Activated CD4-positive, alpha-beta memory T cell treated with anti-CD3 and anti-CD28 coated beads for 36 hours (primary cell): ENCODE measurements at regions of chr17 and their contacts with region 1.

Region 1: GRCh38 chr17:49191917-49192741 is 18.2 kb downstream of the GNGT2 start:
- DNase-seq: peak; percentile 95
- H3K4me3 Mint-ChIP-seq: peak overlapping the region; percentile 83
- H3K27ac Mint-ChIP-seq: peak overlapping the region; percentile 98
- H3K4me1 Mint-ChIP-seq: peaks cover 28% of the 10 kb centered on the region
- H3K27me3 Mint-ChIP-seq: no peaks in the 10 kb centered on the region

Region 2: DNA sequence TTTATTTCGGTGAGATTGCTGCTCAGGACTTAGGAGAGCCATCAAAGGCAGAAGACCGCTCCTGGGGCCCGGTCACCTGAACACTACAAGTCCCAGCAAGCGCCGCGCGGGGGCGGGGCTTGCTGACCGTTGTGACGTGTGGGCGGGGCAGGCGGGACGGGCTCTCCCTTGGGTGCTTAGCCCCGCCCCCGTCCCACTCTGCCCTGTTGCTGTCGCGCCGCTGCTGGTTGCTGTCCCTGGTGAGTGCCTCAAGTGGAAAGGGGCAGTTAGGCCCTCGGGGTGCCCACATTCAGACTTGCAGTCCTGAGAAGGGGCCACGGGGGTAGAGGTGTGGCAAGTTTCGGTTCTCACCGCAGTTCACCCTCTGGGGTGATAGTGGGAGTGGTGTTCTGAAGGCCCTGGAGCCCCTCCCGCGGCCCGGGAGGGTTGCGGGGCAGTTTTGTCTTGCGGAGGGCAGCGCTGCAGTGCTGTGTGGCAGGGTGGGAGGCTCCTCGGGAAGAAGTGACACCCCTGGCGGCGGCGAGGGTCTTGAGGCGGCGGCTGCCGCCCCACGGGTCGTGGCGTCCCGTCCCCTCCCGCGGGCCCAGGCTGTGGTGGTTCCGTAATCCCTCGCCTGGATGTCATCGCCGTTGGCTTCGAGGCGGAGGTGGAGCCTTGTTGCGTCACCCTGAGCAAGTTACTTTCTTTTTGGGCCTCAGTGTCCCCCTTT is 361.1 kb before region 1 on chr17 and contains the start of gene CALCOCO2:
- CTCF ChIA-PET with region 1: interaction called, 6 read pairs
- POLR2A ChIA-PET with region 1: no interaction called
- intact Hi-C with region 1: loop called (anchors 10 kb)
- DNase-seq: peak; percentile 93
- H3K4me3 Mint-ChIP-seq: peak within 1 kb of the TSS; percentile 94
- H3K27ac Mint-ChIP-seq: peak within 1 kb of the TSS; percentile 87
- H3K4me1 Mint-ChIP-seq: peaks cover 42% of the 10 kb centered on the region
- H3K27me3 Mint-ChIP-seq: no peaks in the 10 kb centered on the region
- total RNA-seq, gene CALCOCO2: 65.1 to 72.1 TPM

Region 3: GRCh38 chr17:48908047-48908843 is 283.9 kb before region 1 on chr17 and contains the start of gene UBE2Z:
- CTCF ChIA-PET with region 1: no interaction called
- POLR2A ChIA-PET with region 1: interaction called, 6 read pairs
- intact Hi-C with region 1: loop called (anchors 1 kb)
- DNase-seq: peak; percentile 93
- H3K4me3 Mint-ChIP-seq: peak within 1 kb of the TSS; percentile 87
- H3K27ac Mint-ChIP-seq: peak within 1 kb of the TSS; percentile 97
- H3K4me1 Mint-ChIP-seq: peaks cover 43% of the 10 kb centered on the region
- H3K27me3 Mint-ChIP-seq: no peaks in the 10 kb centered on the region
- total RNA-seq, gene UBE2Z: 102 to 109 TPM

Region 4: DNA sequence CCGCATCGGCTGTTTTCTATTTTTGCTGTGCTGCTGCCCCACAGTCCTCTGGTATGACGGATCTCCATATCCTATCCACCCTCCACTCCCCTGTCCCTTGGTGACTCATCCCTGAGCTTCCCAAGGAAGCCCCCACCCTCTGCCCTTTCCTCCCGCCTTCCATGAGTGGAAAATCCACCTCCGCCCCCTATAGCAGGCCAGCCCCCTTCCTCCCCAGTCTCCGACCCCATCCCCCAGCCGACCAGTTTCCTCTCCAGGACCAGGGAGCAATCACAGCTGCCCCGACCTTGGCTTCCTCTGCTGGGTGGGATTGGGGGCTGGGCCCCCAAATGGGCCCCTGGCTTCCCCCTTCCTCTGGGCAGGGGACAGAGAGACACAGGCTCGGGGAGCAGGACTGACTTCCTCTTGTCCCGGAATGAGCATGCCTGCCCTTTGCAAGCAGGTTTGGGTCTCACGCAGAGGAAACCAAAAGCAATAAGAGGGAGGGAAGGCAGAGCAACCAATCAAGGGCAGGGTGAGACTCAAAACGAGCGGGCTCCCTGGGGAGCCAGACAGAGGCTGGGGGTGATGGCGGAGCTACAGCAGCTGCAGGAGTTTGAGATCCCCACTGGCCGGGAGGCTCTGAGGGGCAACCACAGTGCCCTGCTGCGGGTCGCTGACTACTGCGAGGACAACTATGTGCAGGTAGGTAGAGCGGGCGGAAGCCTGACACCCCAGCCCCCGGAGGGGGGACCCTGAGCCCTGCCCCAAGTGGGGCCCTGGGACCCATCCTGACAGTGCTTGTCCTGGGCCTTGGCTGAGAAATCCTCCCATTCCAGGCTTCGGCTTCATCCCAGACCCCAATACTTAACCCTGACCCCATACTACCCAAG is 18.3 kb after region 1 on chr17 and contains the starts of genes ABI3 and GNGT2:
- CTCF ChIA-PET with region 1: interaction called, 4 read pairs
- POLR2A ChIA-PET with region 1: interaction called, 14 read pairs
- intact Hi-C with region 1: loop called (anchors 2 kb)
- DNase-seq: peak; percentile 83
- H3K4me3 Mint-ChIP-seq: peak within 1 kb of the TSS; percentile 90
- H3K27ac Mint-ChIP-seq: peak within 1 kb of the TSS; percentile 91
- H3K4me1 Mint-ChIP-seq: peaks cover 56% of the 10 kb centered on the region
- H3K27me3 Mint-ChIP-seq: no peaks in the 10 kb centered on the region
- total RNA-seq, gene ABI3: 19.7 to 19.8 TPM
- total RNA-seq, gene GNGT2: 23.2 to 29.0 TPM

Region 5: DNA sequence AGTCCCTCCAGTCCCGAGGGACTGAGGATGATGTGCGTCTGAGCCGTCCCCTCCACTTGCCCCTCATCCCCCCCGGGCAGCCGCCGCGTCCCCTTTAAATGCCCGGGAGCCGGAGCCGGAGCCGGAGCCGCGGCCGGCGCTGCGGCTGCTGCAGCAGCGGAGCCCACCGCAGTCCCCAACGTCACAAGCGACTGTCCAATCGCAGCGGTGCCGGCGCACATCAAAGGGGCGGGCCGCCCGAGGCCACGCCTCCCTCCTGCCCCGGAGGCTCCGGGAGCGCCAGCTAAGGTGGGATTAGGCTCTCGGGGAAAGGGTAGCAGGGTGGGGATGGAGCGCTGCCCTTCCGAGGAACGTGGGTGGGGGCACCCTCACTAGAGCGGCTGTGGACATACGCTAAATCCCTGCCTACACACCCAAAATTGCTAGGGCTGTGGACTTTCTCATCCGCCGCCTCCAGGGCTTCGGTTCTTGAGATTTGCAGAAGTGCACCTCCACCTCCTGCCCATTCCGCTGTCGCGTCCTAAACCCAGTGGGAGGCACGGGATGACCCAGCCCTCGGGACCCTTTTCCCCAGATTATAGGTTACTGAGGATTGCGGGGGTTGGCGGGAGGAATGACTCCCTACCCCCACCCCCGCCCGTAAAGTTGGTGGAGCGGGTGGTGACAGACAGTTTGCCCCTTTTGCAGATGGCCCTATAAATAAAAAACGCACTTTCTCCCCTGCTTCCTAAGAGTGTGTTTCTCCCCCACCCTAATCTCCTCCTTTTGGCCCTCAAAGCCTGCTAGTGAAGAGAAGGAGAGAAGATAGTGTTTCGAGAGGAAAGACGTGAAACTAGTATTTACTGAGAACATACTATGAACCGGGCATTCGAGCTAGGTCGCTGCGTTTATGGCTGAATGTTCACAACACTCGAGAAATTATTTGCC is 38.8 kb after region 1 on chr17 and contains the start of gene PHOSPHO1:
- CTCF ChIA-PET with region 1: interaction called, 31 read pairs
- POLR2A ChIA-PET with region 1: interaction called, 6 read pairs
- intact Hi-C with region 1: no loop called
- DNase-seq: peak; percentile 89
- H3K4me3 Mint-ChIP-seq: peak within 1 kb of the TSS; percentile 74
- H3K27ac Mint-ChIP-seq: no peak within 1 kb of the TSS
- H3K4me1 Mint-ChIP-seq: peaks cover 7% of the 10 kb centered on the region
- H3K27me3 Mint-ChIP-seq: peaks cover 17% of the 10 kb centered on the region
- total RNA-seq, gene PHOSPHO1: not detected

Region 6: DNA sequence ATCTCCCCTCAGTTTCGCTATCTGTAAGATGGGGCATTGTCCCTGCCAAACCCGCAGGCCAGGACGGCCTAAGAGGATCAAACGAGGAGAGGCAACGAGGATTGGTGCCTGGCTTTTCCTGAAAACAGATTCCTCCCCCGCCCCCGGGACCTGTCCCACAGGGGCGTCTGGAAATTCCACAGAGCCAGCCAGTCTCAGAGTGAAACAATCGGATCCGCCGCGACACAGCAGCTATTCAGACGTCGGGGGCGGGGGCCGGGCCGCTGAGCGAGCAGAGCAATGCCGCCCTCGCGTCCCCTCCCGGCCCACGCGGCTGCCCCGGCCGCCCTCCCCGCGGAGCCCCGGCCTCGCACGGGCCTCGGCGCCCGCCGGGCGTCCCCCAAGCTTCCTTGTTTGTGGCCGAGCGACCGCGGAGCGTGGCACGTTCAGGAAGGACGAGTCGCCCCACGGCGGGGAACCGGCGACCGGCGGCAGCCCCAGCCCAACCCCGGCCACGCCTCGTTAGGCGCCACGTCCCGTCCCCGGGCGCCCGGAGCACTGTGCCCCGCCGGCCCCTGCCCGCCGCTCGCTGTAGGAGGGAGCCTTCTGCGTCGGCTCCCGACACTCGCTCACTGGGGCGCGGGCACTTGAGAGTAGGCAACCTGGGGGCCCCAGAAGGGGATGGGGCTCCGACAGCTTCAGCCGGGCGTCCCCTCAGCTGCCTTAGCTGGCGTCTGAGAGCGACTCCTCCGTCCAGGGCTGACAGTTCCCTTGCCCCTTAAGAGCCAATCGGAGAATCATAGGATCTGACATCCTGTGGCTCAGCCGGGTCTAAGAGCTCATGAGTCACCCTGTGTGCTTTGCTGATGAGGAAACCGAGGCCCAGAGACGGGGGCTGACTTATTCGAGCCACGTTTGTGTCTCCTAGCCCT is 68.1 kb after region 1 on chr17:
- CTCF ChIA-PET with region 1: no interaction called
- POLR2A ChIA-PET with region 1: no interaction called
- intact Hi-C with region 1: no loop called
- DNase-seq: peak; percentile 68
- H3K4me3 Mint-ChIP-seq: peak overlapping the region; percentile 77
- H3K27ac Mint-ChIP-seq: no peak overlapping the region
- H3K4me1 Mint-ChIP-seq: peaks cover 9% of the 10 kb centered on the region
- H3K27me3 Mint-ChIP-seq: peaks cover 1% of the 10 kb centered on the region